CD4-positive, alpha-beta T cell (primary cell): ENCODE measurements at regions of chr5 and their contacts with region 1.

Region 1: GRCh38 chr5:94111209-94112004 is 370.0 kb upstream of the POU5F2 start:
- DNase-seq: peak; percentile 84 to 95 (median 90)
- ATAC-seq: peak; percentile 95
- H3K4me3 ChIP-seq: peak overlapping the region; percentile 85
- H3K4me3 Mint-ChIP-seq: peak overlapping the region; percentile 96
- H3K27ac ChIP-seq: peak overlapping the region; percentile 56 to 80
- H3K27ac Mint-ChIP-seq: peak overlapping the region; percentile 94
- H3K4me1 ChIP-seq: peaks cover 14% of the 10 kb centered on the region
- H3K4me1 Mint-ChIP-seq: peaks cover 46% of the 10 kb centered on the region
- H3K27me3 ChIP-seq: no peaks in the 10 kb centered on the region
- H3K27me3 Mint-ChIP-seq: peaks cover 6% of the 10 kb centered on the region
- CTCF ChIP-seq: no peak

Region 2: DNA sequence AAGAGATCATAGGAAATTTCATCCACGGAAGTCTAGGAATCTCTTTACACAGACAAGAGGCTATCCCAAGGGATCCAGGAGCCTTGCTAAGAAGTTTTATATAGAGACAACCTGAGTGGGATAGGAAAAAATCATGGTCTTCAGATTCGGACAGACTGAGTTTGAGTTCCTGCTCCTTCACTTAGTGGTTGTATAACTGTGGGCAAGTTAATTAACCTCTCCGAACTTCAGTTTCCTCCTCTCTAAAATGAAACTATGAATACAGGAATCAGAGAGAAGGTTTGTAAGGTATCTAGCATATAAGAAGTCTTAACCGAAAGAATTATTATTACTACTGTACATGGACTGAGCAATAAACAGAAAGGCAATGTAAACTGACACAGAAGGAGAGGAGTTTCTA is 565.5 kb before region 1 on chr5:
- CTCF ChIA-PET with region 1: no interaction called
- POLR2A ChIA-PET with region 1: no interaction called
- intact Hi-C with region 1: no loop called
- DNase-seq: no peak
- ATAC-seq: no peak
- H3K4me3 ChIP-seq: no peak overlapping the region
- H3K4me3 Mint-ChIP-seq: no peak overlapping the region
- H3K27ac ChIP-seq: no peak overlapping the region
- H3K27ac Mint-ChIP-seq: no peak overlapping the region
- H3K4me1 ChIP-seq: no peaks in the 10 kb centered on the region
- H3K4me1 Mint-ChIP-seq: no peaks in the 10 kb centered on the region
- H3K27me3 ChIP-seq: peaks cover 0 to 5% of the 10 kb centered on the region in 2 experiments
- H3K27me3 Mint-ChIP-seq: peaks cover 55% of the 10 kb centered on the region
- CTCF ChIP-seq: no peak

Region 3: DNA sequence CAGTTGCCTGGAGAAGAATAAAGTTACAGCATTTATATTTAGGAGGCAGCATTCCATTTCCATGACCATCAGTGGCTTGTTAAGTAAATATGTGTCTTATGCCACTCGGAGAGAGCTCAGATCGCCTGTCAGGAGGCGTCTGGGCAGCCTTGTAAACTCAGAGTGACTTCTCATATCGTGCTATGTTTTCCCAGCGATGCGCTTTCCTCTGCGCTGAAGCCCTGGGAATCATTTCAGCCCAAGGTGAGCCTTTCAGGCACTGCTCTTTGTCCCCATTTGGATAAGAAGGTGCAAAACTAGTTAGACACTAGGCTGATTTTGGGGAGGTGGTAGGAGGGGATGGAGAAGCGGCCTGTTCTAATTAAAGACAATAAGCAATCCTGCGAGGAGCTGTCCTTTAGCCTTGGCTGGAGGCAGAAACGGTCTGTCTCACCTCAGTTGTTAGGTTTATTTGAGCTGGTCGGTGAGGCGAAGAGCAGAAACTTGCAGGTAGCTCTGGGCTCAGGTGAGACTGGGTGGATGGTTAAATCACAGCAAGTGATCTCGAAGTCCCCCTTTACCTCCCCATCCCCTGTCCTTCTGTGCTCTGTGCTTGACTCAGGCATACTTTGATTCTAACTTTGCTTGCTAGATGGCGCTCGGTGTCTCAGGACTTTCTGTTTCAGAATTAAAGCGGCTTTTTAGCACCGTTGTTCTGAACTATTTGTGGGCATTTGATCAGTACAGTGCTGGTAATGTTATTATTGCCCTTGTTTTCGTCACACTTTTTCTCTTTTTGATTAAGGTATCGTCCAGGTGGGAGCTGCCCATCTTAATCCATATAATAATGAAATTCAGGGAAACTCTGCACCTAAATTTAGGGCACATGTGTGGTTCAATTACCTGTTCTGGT is 503.8 kb before region 1 on chr5:
- CTCF ChIA-PET with region 1: no interaction called
- POLR2A ChIA-PET with region 1: no interaction called
- intact Hi-C with region 1: loop called in 1 of 2 experiments (anchors 10 kb)
- DNase-seq: peak in 4 of 14 experiments; percentile 32 to 71 (median 62)
- ATAC-seq: peak; percentile 76
- H3K4me3 ChIP-seq: no peak overlapping the region
- H3K4me3 Mint-ChIP-seq: no peak overlapping the region
- H3K27ac ChIP-seq: no peak overlapping the region
- H3K27ac Mint-ChIP-seq: no peak overlapping the region
- H3K4me1 ChIP-seq: peaks cover 18% of the 10 kb centered on the region
- H3K4me1 Mint-ChIP-seq: peaks cover 26% of the 10 kb centered on the region
- H3K27me3 ChIP-seq: peaks cover 68 to 99% of the 10 kb centered on the region in 2 experiments
- H3K27me3 Mint-ChIP-seq: peaks cover 83% of the 10 kb centered on the region
- CTCF ChIP-seq: peak; percentile 48

Region 4: DNA sequence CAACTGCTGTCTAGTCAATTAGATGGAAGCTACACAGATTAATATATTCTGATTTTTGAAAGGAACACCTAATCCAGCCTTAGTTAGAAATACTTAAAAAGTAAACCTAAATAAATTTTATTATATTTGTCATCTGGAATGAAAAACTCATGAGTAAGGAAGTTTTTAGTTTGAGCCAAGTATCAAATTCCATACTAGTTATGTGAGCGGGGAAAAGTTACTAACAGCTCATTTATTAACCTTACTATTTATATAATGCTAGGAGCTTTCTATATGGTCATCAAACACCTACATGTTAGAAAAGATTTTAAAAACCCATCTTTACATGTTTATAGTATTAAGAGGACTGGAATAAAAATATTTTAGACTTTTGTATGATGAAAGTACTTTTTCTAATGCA is 328.4 kb before region 1 on chr5:
- CTCF ChIA-PET with region 1: no interaction called
- POLR2A ChIA-PET with region 1: no interaction called
- intact Hi-C with region 1: no loop called
- DNase-seq: no peak
- ATAC-seq: no peak
- H3K4me3 ChIP-seq: no peak overlapping the region
- H3K4me3 Mint-ChIP-seq: no peak overlapping the region
- H3K27ac ChIP-seq: no peak overlapping the region
- H3K27ac Mint-ChIP-seq: no peak overlapping the region
- H3K4me1 ChIP-seq: no peaks in the 10 kb centered on the region
- H3K4me1 Mint-ChIP-seq: no peaks in the 10 kb centered on the region
- H3K27me3 ChIP-seq: no peaks in the 10 kb centered on the region
- H3K27me3 Mint-ChIP-seq: no peaks in the 10 kb centered on the region
- CTCF ChIP-seq: no peak

Region 5: GRCh38 chr5:94618493-94619328 is 507.3 kb after region 1 on chr5 and contains the starts of genes KIAA0825 and SLF1:
- CTCF ChIA-PET with region 1: no interaction called
- POLR2A ChIA-PET with region 1: no interaction called
- intact Hi-C with region 1: loop called in 1 of 2 experiments (anchors 5 kb)
- DNase-seq: peak; percentile 71 to 92 (median 80)
- ATAC-seq: peak; percentile 87
- H3K4me3 ChIP-seq: peak within 1 kb of the TSS; percentile 93
- H3K4me3 Mint-ChIP-seq: peak within 1 kb of the TSS; percentile 92
- H3K27ac ChIP-seq: peak within 1 kb of the TSS; percentile 37 to 67
- H3K27ac Mint-ChIP-seq: peak within 1 kb of the TSS; percentile 89
- H3K4me1 ChIP-seq: peaks cover 20% of the 10 kb centered on the region
- H3K4me1 Mint-ChIP-seq: peaks cover 51% of the 10 kb centered on the region
- H3K27me3 ChIP-seq: no peaks in the 10 kb centered on the region
- H3K27me3 Mint-ChIP-seq: no peaks in the 10 kb centered on the region
- CTCF ChIP-seq: no peak
- total RNA-seq, gene KIAA0825: 1.5 to 1.6 TPM
- total RNA-seq, gene SLF1: 7.7 to 7.9 TPM